ENCODE measurements at regions of chr5 and their contacts with region 1.

Region 1: DNA sequence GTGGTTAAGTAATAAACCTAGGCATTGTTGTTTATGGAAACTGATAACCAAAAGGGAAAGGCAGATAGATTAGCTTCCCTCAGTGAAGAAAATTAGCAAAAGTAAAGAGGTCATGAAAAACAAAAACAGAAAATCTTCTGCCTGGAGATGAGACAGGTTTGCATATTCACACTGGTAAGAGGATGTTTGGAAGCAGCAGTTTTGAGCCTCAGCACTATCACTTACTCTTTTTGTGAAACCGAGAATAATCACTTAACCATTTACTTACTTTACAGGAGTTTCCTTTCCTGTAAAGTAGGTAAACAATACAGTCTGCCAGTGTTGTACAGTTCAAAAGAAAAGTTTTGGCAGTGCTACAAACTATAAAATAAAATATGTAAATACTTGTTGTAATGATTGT is 35.5 kb upstream of the EMB start:
- DNase-seq: no peak
- H3K4me3 ChIP-seq: no peak overlapping the region
- H3K27ac ChIP-seq: no peak overlapping the region
- H3K4me1 ChIP-seq: no peaks in the 10 kb centered on the region
- H3K27me3 ChIP-seq: no peaks in the 10 kb centered on the region
- CTCF ChIP-seq: no peak

Region 2: DNA sequence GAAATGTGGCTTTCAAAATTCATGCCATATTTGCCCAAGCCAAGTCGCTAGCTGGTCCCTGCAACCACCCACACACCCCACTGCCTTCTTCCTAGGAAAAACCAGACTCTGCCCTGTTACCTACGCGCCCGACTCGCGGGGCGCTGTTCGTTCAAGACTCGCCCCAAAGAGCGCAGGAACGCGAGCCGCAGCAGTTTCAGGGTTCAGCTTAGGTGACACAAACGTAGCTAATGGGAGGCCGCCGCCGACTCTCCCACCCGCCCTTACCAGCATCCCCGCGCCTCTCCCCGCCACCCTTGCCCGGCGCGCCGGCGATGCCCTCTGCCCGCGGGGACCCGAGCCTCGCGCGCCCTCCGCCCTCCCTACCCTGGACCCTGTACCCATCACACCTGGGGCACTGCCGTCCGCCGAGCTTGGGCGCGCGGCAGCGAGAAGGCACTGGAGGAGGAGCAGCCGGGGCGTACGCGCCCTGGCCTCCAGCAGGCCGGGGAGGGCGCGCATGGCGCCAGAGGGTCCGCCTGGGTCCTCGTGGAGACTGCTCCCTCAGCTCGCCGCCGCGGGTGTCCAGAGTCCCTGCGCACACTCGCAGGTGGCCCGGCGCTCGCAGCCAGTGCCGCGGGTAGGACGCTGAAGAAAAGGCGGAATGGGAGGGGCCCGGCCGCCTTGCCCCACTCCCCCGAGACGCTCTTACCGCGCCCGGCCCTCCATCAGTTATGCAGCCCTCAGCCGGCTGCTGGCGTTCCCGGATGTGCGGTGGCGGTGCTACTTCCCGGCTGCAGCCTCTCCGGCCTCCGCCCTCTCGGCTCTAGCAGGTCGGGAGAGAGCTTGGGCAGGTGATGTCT is 35.7 kb before region 1 on chr5 and contains the start of gene EMB:
- CTCF ChIA-PET with region 1: interaction called, 23 read pairs
- dilution Hi-C with region 1: no loop called
- in situ Hi-C with region 1: no loop called
- intact Hi-C with region 1: no loop called
- DNase-seq: peak; percentile 82
- H3K4me3 ChIP-seq: peak within 1 kb of the TSS; percentile 61 to 73 (median 71)
- H3K27ac ChIP-seq: peak within 1 kb of the TSS; percentile 61
- H3K4me1 ChIP-seq: peaks cover 8% of the 10 kb centered on the region
- H3K27me3 ChIP-seq: no peaks in the 10 kb centered on the region
- CTCF ChIP-seq: peak; percentile 9 to 54
- total RNA-seq, gene EMB: 72.9 to 110 TPM

Region 3: DNA sequence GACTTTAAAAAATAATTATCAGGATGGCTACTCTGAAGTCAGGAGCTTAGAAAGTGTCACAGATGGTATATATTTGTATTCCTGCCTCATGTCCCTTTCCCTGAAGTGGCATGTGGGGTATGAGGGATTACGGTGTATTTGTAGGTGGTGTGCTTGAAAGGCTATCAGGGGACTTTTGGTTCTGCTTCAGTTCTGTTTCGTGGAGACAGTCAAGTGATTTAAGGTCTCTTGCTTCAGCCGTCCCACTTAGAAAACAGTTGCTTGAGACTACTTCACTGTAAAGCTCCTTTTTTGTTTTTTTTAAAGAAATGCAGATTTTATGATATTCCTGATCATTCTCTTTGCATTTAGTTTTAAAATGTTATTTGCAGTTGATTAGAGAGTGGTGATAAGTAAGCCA is 208.2 kb after region 1 on chr5:
- CTCF ChIA-PET with region 1: no interaction called
- dilution Hi-C with region 1: no loop called
- in situ Hi-C with region 1: no loop called
- intact Hi-C with region 1: no loop called
- DNase-seq: no peak
- H3K4me3 ChIP-seq: no peak overlapping the region
- H3K27ac ChIP-seq: no peak overlapping the region
- H3K4me1 ChIP-seq: peaks cover 6% of the 10 kb centered on the region
- H3K27me3 ChIP-seq: no peaks in the 10 kb centered on the region
- CTCF ChIP-seq: no peak

Region 4: DNA sequence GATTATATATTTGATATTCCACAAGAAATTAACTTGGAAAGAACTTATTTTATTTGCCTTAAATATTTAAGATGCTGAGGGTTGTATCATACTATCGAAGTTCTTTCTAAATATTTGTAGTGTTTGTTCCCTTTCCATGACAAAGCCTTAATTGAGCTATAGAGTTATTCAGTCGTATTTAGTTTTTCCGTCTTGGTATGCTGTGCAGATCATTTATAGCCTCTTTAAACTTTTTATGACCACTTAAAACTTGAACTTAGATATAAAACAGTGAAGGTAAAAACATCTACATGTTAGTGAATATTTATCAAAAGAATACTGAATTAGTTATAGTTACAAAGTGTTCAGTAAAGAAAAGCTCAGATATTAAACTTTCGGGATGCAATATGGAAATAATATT is 264.3 kb after region 1 on chr5:
- CTCF ChIA-PET with region 1: no interaction called
- dilution Hi-C with region 1: no loop called
- in situ Hi-C with region 1: no loop called
- intact Hi-C with region 1: no loop called
- DNase-seq: no peak
- H3K4me3 ChIP-seq: no peak overlapping the region
- H3K27ac ChIP-seq: no peak overlapping the region
- H3K4me1 ChIP-seq: peaks cover 3% of the 10 kb centered on the region
- H3K27me3 ChIP-seq: no peaks in the 10 kb centered on the region
- CTCF ChIP-seq: no peak

Region 5: DNA sequence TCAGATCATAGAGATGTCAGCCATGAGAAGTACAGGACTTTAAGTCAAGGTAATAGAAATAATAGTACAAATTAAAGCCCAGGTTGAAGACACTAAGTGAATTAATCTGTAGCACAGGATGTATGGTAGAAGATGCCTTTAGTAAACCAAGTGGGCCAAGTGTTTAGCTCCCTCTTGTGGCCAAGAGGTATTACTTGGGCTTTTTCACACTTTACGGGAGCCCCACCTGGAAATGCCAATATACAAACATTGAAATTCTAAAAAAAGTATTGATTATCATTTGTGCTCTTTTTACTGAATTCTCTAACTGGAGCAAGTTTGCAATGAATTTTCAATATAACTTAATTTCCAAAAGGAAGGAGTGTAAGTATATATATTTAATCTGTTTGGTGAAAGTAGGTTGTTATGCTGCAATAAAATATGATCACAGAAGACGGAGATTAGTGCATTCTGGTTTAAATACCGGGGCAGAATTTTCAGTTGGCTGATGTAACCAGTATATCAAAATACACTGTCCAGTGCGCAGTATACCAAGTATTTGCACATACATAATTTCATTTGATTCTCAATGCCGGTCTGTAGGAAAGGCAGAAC is 274.6 kb after region 1 on chr5:
- CTCF ChIA-PET with region 1: no interaction called
- dilution Hi-C with region 1: no loop called
- in situ Hi-C with region 1: no loop called
- intact Hi-C with region 1: no loop called
- DNase-seq: peak; percentile 50
- H3K4me3 ChIP-seq: no peak overlapping the region
- H3K27ac ChIP-seq: no peak overlapping the region
- H3K4me1 ChIP-seq: no peaks in the 10 kb centered on the region
- H3K27me3 ChIP-seq: no peaks in the 10 kb centered on the region
- CTCF ChIP-seq: peak; percentile 76 to 87

Measured in mammary epithelial cell (primary cell).